MCF 10A (cell line): ENCODE measurements at regions of chr2 and their contacts with region 1.

Region 1: DNA sequence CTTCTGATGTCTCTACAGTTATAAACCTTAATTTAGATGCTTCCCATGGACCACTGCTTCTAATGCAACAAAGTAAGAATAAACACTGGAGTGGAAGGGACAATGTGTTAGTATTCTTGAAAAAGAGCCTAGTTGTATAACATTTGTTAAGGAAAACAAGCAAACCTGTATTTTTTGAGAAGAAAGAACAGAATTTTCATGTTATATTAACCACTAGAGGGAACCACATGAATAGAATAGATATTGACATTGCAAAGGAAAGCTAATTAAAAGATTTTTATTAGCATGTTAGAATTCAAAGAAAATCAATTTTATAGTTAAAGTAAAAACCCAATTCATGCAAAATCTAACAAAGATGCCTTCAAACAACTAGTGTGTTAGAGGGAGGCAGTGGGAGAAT is 151.2 kb upstream of the BARD1 start:
- DNase-seq: peak; percentile 13
- H3K4me3 Mint-ChIP-seq: no peak overlapping the region
- H3K27ac Mint-ChIP-seq: no peak overlapping the region
- H3K4me1 Mint-ChIP-seq: no peaks in the 10 kb centered on the region
- H3K27me3 Mint-ChIP-seq: no peaks in the 10 kb centered on the region
- CTCF ChIP-seq: peak; percentile 24

Region 2: GRCh38 chr2:215311625-215312396 is 351.1 kb after region 1 on chr2 and contains the start of gene ATIC:
- CTCF ChIA-PET with region 1: interaction called, 3 read pairs
- POLR2A ChIA-PET with region 1: no interaction called
- intact Hi-C with region 1: loop called (anchors 5 kb)
- DNase-seq: peak; percentile 97
- H3K4me3 Mint-ChIP-seq: peak within 1 kb of the TSS; percentile 83
- H3K27ac Mint-ChIP-seq: peak within 1 kb of the TSS; percentile 88
- H3K4me1 Mint-ChIP-seq: peaks cover 13% of the 10 kb centered on the region
- H3K27me3 Mint-ChIP-seq: no peaks in the 10 kb centered on the region
- CTCF ChIP-seq: no peak
- total RNA-seq, gene ATIC: 216 and 297 TPM in 2 replicates

Region 3: GRCh38 chr2:215680605-215681598 is 720.2 kb after region 1 on chr2:
- CTCF ChIA-PET with region 1: no interaction called
- POLR2A ChIA-PET with region 1: no interaction called
- intact Hi-C with region 1: no loop called
- DNase-seq: peak; percentile 74
- H3K4me3 Mint-ChIP-seq: no peak overlapping the region
- H3K27ac Mint-ChIP-seq: peak overlapping the region; percentile 70
- H3K4me1 Mint-ChIP-seq: peaks cover 43% of the 10 kb centered on the region
- H3K27me3 Mint-ChIP-seq: no peaks in the 10 kb centered on the region
- CTCF ChIP-seq: no peak